ENCODE measurements at regions of chr3 and their contacts with region 1.

Region 1: DNA sequence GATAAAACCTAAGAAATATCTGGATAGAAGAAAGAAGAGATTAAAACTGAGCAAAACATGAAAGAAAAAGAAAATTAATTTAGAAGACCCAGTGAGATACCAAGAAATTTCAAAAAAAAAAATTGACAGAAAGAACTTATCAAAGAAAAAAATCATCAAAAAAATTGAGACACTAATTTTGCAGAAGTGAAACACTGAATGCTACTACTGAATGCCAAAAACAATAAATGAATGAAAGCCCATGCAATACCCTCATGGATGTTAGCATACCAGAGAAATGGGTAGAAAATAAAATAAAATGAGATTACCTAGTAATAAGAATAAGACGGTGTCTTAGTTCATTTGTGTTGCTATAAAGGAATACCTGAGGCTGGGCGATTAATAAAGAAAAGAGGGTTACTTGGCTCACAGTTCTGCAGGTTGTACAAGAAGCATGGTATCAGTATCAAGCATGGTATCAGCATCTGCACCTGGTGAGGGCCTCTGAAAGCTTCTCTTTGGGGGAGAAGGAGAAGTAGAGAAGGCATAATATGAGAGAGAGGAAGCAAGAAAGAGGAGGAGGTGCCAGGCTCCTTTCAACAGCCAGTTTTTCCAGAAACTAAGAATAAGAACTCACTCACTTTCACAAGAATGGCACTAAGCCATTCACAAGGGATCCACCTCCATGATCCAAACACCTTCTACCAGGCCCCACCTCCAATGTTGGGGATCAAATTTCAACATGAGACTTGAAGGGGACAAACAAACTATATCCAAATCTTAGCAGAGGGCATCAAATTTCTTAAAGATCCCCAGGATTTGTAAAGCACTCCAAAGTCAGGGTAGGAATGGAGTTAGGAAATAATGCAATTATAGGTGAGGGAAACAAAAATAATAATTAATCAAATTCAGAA is 73.2 kb downstream of the BTLA start:
- DNase-seq: no peak
- ATAC-seq: no peak
- H3K4me3 ChIP-seq: no peak overlapping the region
- H3K4me3 Mint-ChIP-seq: no peak overlapping the region
- H3K27ac ChIP-seq: no peak overlapping the region
- H3K27ac Mint-ChIP-seq: no peak overlapping the region
- H3K4me1 ChIP-seq: no peaks in the 10 kb centered on the region
- H3K4me1 Mint-ChIP-seq: no peaks in the 10 kb centered on the region
- H3K27me3 ChIP-seq: no peaks in the 10 kb centered on the region
- H3K27me3 Mint-ChIP-seq: no peaks in the 10 kb centered on the region
- CTCF ChIP-seq: no peak

Region 2: GRCh38 chr3:112437146-112438022 is 11.3 kb after region 1 on chr3:
- CTCF ChIA-PET with region 1: no interaction called
- POLR2A ChIA-PET with region 1: interaction called, 3 read pairs
- intact Hi-C with region 1: loop called in 1 of 2 experiments (anchors 1 kb)
- DNase-seq: peak in 2 of 9 experiments; percentile 47 to 57
- ATAC-seq: peak; percentile 42
- H3K4me3 ChIP-seq: peak overlapping the region in 1 of 2 experiments; percentile 19
- H3K4me3 Mint-ChIP-seq: no peak overlapping the region
- H3K27ac ChIP-seq: no peak overlapping the region
- H3K27ac Mint-ChIP-seq: no peak overlapping the region
- H3K4me1 ChIP-seq: no peaks in the 10 kb centered on the region
- H3K4me1 Mint-ChIP-seq: peaks cover 8% of the 10 kb centered on the region
- H3K27me3 ChIP-seq: no peaks in the 10 kb centered on the region
- H3K27me3 Mint-ChIP-seq: no peaks in the 10 kb centered on the region
- CTCF ChIP-seq: no peak